Activated naive CD4-positive, alpha-beta T cell treated with anti-CD3 and anti-CD28 coated beads for 36 hours (primary cell): ENCODE measurements at regions of chr10 and their contacts with region 1.

Region 1: GRCh38 chr10:46273506-46274477 is 13.0 kb upstream of the ANTXRL start:
- DNase-seq: no peak
- H3K4me3 Mint-ChIP-seq: no peak overlapping the region
- H3K27ac Mint-ChIP-seq: no peak overlapping the region
- H3K4me1 Mint-ChIP-seq: peaks cover 41% of the 10 kb centered on the region
- H3K27me3 Mint-ChIP-seq: no peaks in the 10 kb centered on the region

Region 2: GRCh38 chr10:46171661-46172060 is 102.1 kb before region 1 on chr10:
- CTCF ChIA-PET with region 1: no interaction called
- intact Hi-C with region 1: no loop called
- DNase-seq: no peak
- H3K4me3 Mint-ChIP-seq: no peak overlapping the region
- H3K27ac Mint-ChIP-seq: no peak overlapping the region
- H3K4me1 Mint-ChIP-seq: no peaks in the 10 kb centered on the region
- H3K27me3 Mint-ChIP-seq: no peaks in the 10 kb centered on the region

Region 3: GRCh38 chr10:46291817-46292572 is 18.2 kb after region 1 on chr10:
- CTCF ChIA-PET with region 1: no interaction called
- intact Hi-C with region 1: no loop called
- DNase-seq: no peak
- H3K4me3 Mint-ChIP-seq: no peak overlapping the region
- H3K27ac Mint-ChIP-seq: no peak overlapping the region
- H3K4me1 Mint-ChIP-seq: no peaks in the 10 kb centered on the region
- H3K27me3 Mint-ChIP-seq: no peaks in the 10 kb centered on the region

Region 4: DNA sequence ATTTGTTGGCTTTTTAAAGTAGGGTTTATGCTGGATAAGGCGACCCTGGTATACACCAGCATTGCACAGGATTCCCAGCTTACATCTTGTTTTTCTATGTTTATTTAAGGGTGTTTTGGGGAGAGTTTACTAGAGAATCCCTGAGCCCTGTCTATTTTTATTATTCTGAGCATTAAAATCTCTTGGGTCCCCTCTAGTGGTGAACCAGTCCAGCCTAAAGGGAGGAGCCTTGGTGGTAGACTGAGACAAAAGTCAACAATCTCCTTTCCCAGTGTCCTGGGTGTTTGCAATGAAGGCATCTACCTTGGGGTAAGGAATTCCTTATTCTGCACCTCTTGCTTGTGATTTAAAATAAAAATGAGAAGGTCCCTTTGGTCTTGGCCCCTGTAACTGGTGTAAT is 51.2 kb after region 1 on chr10:
- CTCF ChIA-PET with region 1: no interaction called
- intact Hi-C with region 1: loop called (anchors 1 kb)
- DNase-seq: no peak
- H3K4me3 Mint-ChIP-seq: no peak overlapping the region
- H3K27ac Mint-ChIP-seq: no peak overlapping the region
- H3K4me1 Mint-ChIP-seq: no peaks in the 10 kb centered on the region
- H3K27me3 Mint-ChIP-seq: no peaks in the 10 kb centered on the region